HEK293 (cell line): ENCODE measurements at regions of chr7 and their contacts with region 1.

Region 1: DNA sequence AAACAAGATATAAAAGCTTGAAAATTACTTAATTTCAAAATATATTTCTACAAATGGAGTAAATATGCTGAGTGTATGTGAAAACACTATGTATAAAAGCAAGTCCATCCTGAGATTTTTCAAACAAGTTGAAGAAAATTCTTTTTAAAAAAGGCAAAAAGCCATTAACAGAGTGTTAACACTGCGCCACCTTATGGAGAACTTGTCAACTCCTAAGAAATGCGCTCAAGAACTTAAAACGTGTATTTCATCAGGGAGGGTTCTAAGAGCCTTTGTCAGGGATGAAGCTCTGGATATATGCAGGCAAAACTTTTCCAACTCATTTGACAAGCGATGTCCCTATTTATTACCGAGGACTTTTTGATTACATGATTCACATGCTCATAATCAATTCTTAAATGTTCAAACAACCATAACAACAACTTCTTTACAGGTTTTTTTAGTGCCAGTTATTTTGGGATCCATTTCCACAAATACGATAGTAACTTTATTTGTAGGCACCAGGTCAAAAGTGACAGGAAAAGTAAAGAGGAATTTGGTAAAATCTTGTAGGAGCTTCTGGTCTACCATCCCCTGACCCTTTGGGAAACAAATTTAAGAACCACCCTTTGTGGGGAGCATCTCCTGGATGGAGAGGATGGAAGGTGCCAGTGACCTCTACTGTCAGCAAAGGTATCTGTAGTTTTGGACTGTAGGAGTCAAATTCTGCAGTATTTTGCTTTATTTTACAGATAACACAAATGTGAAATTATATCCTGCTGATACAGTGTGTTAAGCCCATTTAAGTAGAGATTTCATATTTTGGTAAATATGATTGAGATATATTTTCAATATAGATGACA is 23.2 kb downstream of the CALCR start:
- H3K4me3 ChIP-seq: no peak overlapping the region
- H3K27ac ChIP-seq: no peak overlapping the region
- H3K4me1 ChIP-seq: no peaks in the 10 kb centered on the region
- CTCF ChIP-seq: no peak; the same call in 1 of the 2 replicates

Region 2: DNA sequence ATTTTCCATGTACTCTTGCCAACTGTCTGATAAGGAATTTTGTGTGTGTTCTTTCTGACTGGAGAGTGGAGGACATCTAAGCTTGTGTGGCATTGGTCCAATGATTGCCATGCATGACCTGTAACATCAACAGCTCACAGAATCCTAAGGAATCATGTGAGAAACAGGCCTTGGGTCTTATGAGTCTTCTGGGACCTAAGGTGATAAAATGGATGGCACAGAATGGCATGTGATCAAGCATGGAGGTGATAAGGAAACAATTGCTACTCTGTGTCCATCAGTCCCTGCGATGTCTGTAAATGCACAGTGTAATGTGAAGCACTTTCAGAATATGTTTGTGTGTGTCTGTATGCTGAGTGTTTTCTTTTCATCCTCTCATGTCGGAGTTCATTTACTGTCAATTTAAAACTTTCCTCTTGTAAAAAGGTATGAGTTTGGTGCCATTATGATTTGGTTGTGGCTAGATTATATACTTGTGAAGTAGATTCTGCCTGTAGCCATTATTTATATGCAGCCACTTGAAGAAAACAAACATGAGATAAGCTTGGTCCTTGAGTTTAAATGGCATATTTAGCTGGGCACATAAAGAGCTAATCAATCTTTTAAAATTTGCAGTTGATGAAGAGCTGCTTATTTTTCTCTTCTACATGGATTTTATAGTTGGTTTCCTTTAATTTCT is 191.6 kb before region 1 on chr7:
- CTCF ChIA-PET with region 1: no interaction called
- POLR2A ChIA-PET with region 1: no interaction called
- H3K4me3 ChIP-seq: no peak overlapping the region
- H3K27ac ChIP-seq: no peak overlapping the region
- H3K4me1 ChIP-seq: peaks cover 7% of the 10 kb centered on the region
- CTCF ChIP-seq: no peak

Region 3: GRCh38 chr7:93530701-93531100 is 20.6 kb before region 1 on chr7:
- CTCF ChIA-PET with region 1: interaction called, 14 read pairs
- POLR2A ChIA-PET with region 1: no interaction called
- H3K4me3 ChIP-seq: no peak overlapping the region
- H3K27ac ChIP-seq: no peak overlapping the region
- H3K4me1 ChIP-seq: no peaks in the 10 kb centered on the region
- CTCF ChIP-seq: no peak